Posterior vena cava (tissue), 2 donors: ENCODE measurements at regions of chr9 and their contacts with region 1.

Region 1: GRCh38 chr9:93207326-93207814 is 23.4 kb downstream of the WNK2 start:
- DNase-seq: peak; percentile 91

Region 2: GRCh38 chr9:95167998-95168397 is 1960.6 kb after region 1 on chr9:
- intact Hi-C with region 1: loop called in 1 of 2 experiments (anchors 5 kb)
- DNase-seq: no peak